Heart left ventricle (tissue), 16 donors: ENCODE measurements at regions of chr18 and their contacts with region 1.

Region 1: GRCh38 chr18:13993730-13994129 is 78.4 kb upstream of the MC2R start:
- DNase-seq: no peak
- ATAC-seq: no peak
- H3K4me3 ChIP-seq: no peak overlapping the region
- H3K27ac ChIP-seq: no peak overlapping the region
- H3K4me1 ChIP-seq: no peaks in the 10 kb centered on the region
- H3K27me3 ChIP-seq: no peaks in the 10 kb centered on the region
- CTCF ChIP-seq: no peak
- POLR2A ChIP-seq: no peak

Region 2: DNA sequence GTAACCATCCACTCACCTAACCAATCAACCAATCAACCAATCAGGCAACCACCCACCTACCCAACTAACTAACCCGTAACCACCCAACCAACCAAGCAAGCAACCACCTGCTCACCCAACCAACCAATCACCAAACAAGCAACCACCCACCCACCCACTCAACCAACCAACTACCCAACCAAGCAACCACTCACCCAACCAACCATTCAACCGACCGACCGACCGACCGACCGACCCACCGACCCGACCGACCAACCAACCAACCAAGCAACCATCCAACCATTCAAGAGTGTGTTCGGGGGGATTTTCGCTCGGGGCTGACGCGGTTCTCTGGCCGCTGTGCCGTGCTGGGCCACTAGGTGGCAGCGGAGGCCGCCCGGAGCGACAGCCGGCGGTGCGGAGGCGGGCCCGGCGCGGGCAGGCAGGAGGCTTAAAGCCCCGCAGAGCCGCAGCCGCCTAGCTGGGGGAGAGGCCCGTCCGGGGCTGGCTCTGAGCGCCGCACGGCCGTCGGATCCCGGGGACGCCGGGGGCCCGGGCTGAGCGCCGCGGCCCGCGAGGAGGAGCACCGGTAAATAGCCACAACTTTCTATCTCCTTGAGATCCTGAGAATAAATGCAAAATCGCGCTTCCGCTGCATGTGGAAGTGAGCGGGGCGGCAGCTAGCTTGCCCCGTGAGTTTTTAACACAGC is 169.9 kb before region 1 on chr18 and contains the start of gene MC5R:
- intact Hi-C with region 1: no loop called
- DNase-seq: peak; percentile 47 to 88 (median 57)
- ATAC-seq: peak; percentile 64 to 97 (median 82)
- H3K4me3 ChIP-seq: peak within 1 kb of the TSS in 10 of 12 donors; percentile 2 to 61 (median 46)
- H3K27ac ChIP-seq: no peak within 1 kb of the TSS
- H3K4me1 ChIP-seq: peaks cover 0 to 7% (median 1%) of the 10 kb centered on the region in 12 donors
- H3K27me3 ChIP-seq: peaks cover 6 to 41% (median 12%) of the 10 kb centered on the region in 9 donors
- CTCF ChIP-seq: peak; percentile 58 to 97 (median 81)
- POLR2A ChIP-seq: no peak
- total RNA-seq, gene MC5R: not detected

Region 3: GRCh38 chr18:14043903-14044302 is 50.2 kb after region 1 on chr18:
- intact Hi-C with region 1: loop called in 1 of 10 experiments (anchors 10 kb)
- DNase-seq: no peak
- ATAC-seq: no peak
- H3K4me3 ChIP-seq: no peak overlapping the region
- H3K27ac ChIP-seq: no peak overlapping the region
- H3K4me1 ChIP-seq: no peaks in the 10 kb centered on the region
- H3K27me3 ChIP-seq: no peaks in the 10 kb centered on the region
- CTCF ChIP-seq: no peak
- POLR2A ChIP-seq: no peak